ENCODE measurements at regions of chr15 and their contacts with region 1.

Region 1: GRCh38 chr15:74906446-74907162 is at the start of gene FAM219B:
- DNase-seq: peak; percentile 68 to 83 (median 71)
- H3K4me3 ChIP-seq: peak within 1 kb of the TSS; percentile 93
- H3K4me3 Mint-ChIP-seq: peak within 1 kb of the TSS; percentile 92 to 99 (median 99)
- H3K27ac ChIP-seq: peak within 1 kb of the TSS; percentile 80
- H3K27ac Mint-ChIP-seq: peak within 1 kb of the TSS; percentile 94 to 99 (median 98)
- H3K4me1 ChIP-seq: peaks cover 32% of the 10 kb centered on the region
- H3K4me1 Mint-ChIP-seq: peaks cover 38 to 42% (median 41%) of the 10 kb centered on the region in 3 donors
- H3K27me3 ChIP-seq: no peaks in the 10 kb centered on the region
- H3K27me3 Mint-ChIP-seq: no peaks in the 10 kb centered on the region
- total RNA-seq, gene FAM219B: 45.0 to 47.7 TPM

Region 2: DNA sequence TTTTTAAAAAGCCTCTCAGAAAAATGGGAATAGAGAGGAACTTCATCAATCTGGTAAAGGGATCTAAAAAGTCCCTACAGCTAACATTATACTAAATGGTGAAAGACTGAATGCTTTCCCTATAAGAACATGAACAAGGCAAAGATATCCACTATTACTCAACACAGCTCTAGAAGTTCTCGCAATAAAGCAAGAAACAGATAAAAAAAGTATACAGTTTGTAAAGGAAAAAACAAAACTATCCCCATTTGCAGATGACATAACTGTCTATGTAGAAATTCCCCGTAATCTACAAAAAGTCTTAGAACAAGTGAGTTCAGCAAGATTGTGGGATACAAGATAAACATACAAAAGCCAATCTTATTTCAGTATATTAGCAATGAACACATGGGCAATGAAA is 226.1 kb before region 1 on chr15:
- CTCF ChIA-PET with region 1: no interaction called
- POLR2A ChIA-PET with region 1: no interaction called
- DNase-seq: no peak
- H3K4me3 ChIP-seq: no peak overlapping the region
- H3K4me3 Mint-ChIP-seq: no peak overlapping the region
- H3K27ac ChIP-seq: no peak overlapping the region
- H3K27ac Mint-ChIP-seq: no peak overlapping the region
- H3K4me1 ChIP-seq: no peaks in the 10 kb centered on the region
- H3K4me1 Mint-ChIP-seq: peaks cover 30 to 45% (median 37%) of the 10 kb centered on the region in 3 donors
- H3K27me3 ChIP-seq: no peaks in the 10 kb centered on the region
- H3K27me3 Mint-ChIP-seq: no peaks in the 10 kb centered on the region

Region 3: DNA sequence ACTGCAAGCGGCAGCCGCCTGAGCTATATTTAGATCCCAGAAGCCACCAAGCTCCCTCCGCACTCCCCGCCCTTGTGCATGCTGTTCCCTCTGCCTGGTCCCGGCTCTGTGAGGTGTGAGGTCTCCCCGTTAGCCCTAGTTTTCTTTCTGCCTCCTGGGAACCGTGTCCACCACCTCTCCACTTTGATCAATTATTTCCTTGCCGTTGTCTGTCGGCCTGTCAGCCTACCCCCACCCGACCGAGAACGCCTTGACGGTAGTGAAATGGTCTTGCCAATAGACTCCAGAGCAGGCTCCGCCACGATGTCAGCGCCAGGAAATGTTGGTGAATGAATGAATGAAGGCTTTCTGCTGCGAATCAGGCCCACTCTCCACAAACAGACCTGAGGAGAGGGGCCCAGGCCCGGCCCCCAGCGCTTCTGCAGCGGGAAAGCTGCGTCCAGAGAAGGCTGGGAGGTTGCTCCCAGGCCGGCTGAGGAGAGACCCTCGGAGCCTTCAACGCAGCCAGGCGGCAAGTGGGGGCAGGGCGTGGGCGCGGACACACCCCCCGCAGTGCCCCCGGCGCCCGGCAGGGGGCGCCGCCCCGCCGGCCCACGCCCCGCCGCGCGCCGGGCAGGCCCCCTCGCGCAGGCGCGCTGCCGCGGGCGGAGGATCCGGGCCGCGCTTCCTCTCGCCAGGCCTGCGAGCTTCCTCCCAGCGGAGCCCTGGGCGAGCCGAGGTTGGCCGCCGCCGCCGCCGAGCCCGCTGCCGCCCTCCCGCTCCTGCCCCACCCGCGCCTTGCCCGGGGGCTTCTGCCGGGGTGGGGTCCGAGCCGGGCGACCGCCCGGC is 125.0 kb before region 1 on chr15 and contains the start of gene CSK:
- CTCF ChIA-PET with region 1: interaction called, 15 read pairs
- POLR2A ChIA-PET with region 1: interaction called, 3 read pairs
- DNase-seq: peak; percentile 76 to 87 (median 83)
- H3K4me3 ChIP-seq: peak within 1 kb of the TSS; percentile 99
- H3K4me3 Mint-ChIP-seq: peak within 1 kb of the TSS; percentile 85 to 98 (median 95)
- H3K27ac ChIP-seq: peak within 1 kb of the TSS; percentile 74
- H3K27ac Mint-ChIP-seq: peak within 1 kb of the TSS; percentile 93 to 100 (median 98)
- H3K4me1 ChIP-seq: peaks cover 66% of the 10 kb centered on the region
- H3K4me1 Mint-ChIP-seq: peaks cover 71 to 81% (median 76%) of the 10 kb centered on the region in 3 donors
- H3K27me3 ChIP-seq: no peaks in the 10 kb centered on the region
- H3K27me3 Mint-ChIP-seq: peaks cover 0 to 5% of the 10 kb centered on the region in 2 donors
- total RNA-seq, gene CSK: 288 to 294 TPM

Region 4: DNA sequence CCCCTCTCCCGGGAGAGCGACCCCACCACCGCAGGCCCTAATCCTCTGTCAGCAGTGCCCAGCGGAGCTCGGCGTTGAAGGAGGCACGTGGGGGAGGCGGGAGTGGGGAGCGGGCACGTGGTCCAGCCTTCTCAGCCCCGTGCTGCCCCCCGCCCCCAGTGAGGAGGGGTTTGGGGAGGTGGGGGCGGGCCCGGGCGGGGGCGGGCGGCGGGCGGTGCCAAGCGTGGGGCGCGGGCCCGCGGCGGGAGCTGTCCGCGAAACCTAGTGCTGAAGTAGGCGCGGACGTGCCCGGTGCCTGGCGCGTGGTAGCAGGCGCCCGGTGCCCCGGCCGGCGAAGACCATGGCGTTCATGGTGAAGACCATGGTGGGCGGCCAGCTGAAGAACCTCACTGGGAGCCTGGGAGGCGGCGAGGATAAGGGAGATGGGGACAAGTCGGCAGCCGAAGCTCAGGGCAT is 80.2 kb before region 1 on chr15 and contains the start of gene CPLX3:
- CTCF ChIA-PET with region 1: interaction called, 12 read pairs
- POLR2A ChIA-PET with region 1: no interaction called
- DNase-seq: peak; percentile 28 to 62 (median 44)
- H3K4me3 ChIP-seq: no peak within 1 kb of the TSS
- H3K4me3 Mint-ChIP-seq: no peak within 1 kb of the TSS
- H3K27ac ChIP-seq: no peak within 1 kb of the TSS
- H3K27ac Mint-ChIP-seq: no peak within 1 kb of the TSS
- H3K4me1 ChIP-seq: no peaks in the 10 kb centered on the region
- H3K4me1 Mint-ChIP-seq: peaks cover 0 to 7% (median 1%) of the 10 kb centered on the region in 3 donors
- H3K27me3 ChIP-seq: peaks cover 15% of the 10 kb centered on the region
- H3K27me3 Mint-ChIP-seq: peaks cover 18 to 33% of the 10 kb centered on the region in 2 donors
- total RNA-seq, gene CPLX3: not detected

Region 5: DNA sequence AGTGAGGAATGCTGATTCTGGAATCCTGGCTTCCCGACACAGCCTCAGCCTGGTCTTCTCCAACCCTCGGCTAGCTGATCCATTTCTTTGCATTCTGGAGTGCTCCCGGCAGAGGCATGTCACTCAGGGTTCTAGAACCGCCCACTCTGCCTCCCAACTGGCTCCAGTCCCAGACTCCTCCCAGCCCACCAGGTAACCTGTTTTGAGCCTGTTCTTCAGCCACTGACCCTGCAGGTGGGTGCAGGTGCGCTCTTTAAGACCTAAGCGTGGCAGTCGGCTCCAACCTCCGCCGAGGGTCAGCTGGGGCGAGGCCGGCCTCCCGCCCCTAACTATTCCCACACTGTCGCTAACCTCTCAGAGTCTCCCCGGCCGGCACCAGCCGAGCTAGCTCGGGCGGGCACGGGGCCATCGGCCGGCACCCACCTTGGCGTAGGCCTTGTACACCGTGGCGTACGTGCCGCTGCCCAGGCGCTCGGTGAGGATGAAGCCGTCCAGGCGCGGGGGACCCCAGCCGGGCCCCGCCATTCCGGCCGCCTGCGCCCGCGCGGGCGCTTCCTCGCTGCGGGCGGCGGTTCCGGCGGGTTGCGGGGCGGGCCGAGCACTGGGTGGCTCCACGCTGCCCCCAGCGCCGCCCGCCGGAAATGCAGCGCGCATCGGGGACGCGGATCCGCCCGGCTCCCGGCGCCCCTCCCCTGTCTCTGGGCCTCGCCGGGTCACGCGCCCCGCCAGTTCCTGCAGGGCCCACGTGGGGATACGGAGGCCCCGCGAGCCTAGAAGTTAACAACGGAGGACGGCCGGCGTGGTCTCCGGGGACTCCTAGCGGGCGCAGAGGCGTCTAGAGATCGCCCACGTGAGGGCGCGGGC is 63.8 kb before region 1 on chr15 and contains the start of gene ULK3:
- CTCF ChIA-PET with region 1: interaction called, 44 read pairs
- POLR2A ChIA-PET with region 1: interaction called, 6 read pairs
- DNase-seq: peak; percentile 91 to 93 (median 91)
- H3K4me3 ChIP-seq: peak within 1 kb of the TSS; percentile 88
- H3K4me3 Mint-ChIP-seq: peak within 1 kb of the TSS; percentile 83 to 96 (median 88)
- H3K27ac ChIP-seq: peak within 1 kb of the TSS; percentile 72
- H3K27ac Mint-ChIP-seq: peak within 1 kb of the TSS; percentile 87 to 98 (median 93)
- H3K4me1 ChIP-seq: peaks cover 48% of the 10 kb centered on the region
- H3K4me1 Mint-ChIP-seq: peaks cover 47 to 59% (median 50%) of the 10 kb centered on the region in 3 donors
- H3K27me3 ChIP-seq: no peaks in the 10 kb centered on the region
- H3K27me3 Mint-ChIP-seq: no peaks in the 10 kb centered on the region
- total RNA-seq, gene ULK3: 53.9 to 60.1 TPM

Region 6: GRCh38 chr15:74857712-74858368 is 48.8 kb before region 1 on chr15:
- CTCF ChIA-PET with region 1: interaction called, 13 read pairs
- POLR2A ChIA-PET with region 1: interaction called, 7 read pairs
- DNase-seq: no peak
- H3K4me3 ChIP-seq: no peak overlapping the region
- H3K4me3 Mint-ChIP-seq: peak overlapping the region in 5 of 7 donors; percentile 0 to 68 (median 45)
- H3K27ac ChIP-seq: no peak overlapping the region
- H3K27ac Mint-ChIP-seq: peak overlapping the region; percentile 70 to 96 (median 87)
- H3K4me1 ChIP-seq: peaks cover 35% of the 10 kb centered on the region
- H3K4me1 Mint-ChIP-seq: peaks cover 32 to 44% (median 37%) of the 10 kb centered on the region in 3 donors
- H3K27me3 ChIP-seq: no peaks in the 10 kb centered on the region
- H3K27me3 Mint-ChIP-seq: no peaks in the 10 kb centered on the region

Region 7: GRCh38 chr15:74884428-74885223 is 22.0 kb before region 1 on chr15:
- CTCF ChIA-PET with region 1: interaction called, 12 read pairs
- POLR2A ChIA-PET with region 1: interaction called, 11 read pairs
- DNase-seq: no peak
- H3K4me3 ChIP-seq: no peak overlapping the region
- H3K4me3 Mint-ChIP-seq: no peak overlapping the region
- H3K27ac ChIP-seq: no peak overlapping the region
- H3K27ac Mint-ChIP-seq: no peak overlapping the region
- H3K4me1 ChIP-seq: peaks cover 6% of the 10 kb centered on the region
- H3K4me1 Mint-ChIP-seq: peaks cover 14 to 21% (median 17%) of the 10 kb centered on the region in 3 donors
- H3K27me3 ChIP-seq: no peaks in the 10 kb centered on the region
- H3K27me3 Mint-ChIP-seq: no peaks in the 10 kb centered on the region

Region 8: GRCh38 chr15:74950078-74951000 is 43.7 kb after region 1 on chr15:
- CTCF ChIA-PET with region 1: interaction called, 11 read pairs
- POLR2A ChIA-PET with region 1: no interaction called
- DNase-seq: peak; percentile 64 to 82 (median 69)
- H3K4me3 ChIP-seq: no peak overlapping the region
- H3K4me3 Mint-ChIP-seq: peak overlapping the region in 1 of 7 donors; percentile 1
- H3K27ac ChIP-seq: no peak overlapping the region
- H3K27ac Mint-ChIP-seq: no peak overlapping the region
- H3K4me1 ChIP-seq: peaks cover 3% of the 10 kb centered on the region
- H3K4me1 Mint-ChIP-seq: peaks cover 0 to under 1% (median 0%) of the 10 kb centered on the region in 3 donors
- H3K27me3 ChIP-seq: no peaks in the 10 kb centered on the region
- H3K27me3 Mint-ChIP-seq: peaks cover 0 to 3% of the 10 kb centered on the region in 2 donors

Region 9: DNA sequence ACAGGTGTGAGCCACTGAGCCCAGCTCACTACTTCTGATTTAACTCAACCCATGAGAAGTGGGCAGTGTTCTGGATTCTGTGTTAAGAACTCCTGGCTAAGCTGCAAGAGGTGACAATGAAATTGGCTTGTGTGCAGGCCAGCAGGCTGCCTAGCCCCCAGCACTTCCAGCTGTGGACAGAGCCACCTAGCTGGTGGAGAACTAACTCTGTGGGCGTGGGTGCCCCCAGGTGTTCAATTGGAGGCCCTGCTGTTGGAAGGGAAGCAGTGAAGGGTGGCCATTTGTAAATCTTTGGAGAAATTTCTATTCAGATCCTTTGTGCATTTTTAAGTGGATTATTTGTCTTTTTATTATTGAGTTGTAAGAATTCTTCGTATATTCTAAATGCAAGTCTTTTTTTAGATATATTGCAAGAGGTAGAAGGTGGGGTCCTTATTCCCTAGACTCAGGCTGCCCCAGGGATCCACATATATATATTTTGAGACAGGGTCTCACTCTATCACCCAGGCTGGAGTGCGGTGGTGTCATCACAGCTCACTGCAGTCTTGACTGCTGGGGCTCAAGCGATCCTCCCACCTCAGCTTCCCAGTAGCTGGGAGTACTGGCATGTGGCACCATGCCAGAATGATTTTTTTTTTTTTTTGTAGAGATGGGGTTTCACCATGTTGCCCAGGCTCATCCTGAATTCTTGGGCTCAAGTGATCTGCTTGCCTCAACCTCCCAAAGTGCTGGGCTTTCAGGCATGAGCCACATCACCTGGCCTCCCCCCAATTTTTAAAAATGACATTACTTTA is 81.6 kb after region 1 on chr15:
- CTCF ChIA-PET with region 1: no interaction called
- POLR2A ChIA-PET with region 1: no interaction called
- DNase-seq: peak in 3 of 5 donors; percentile 7 to 52 (median 10)
- H3K4me3 ChIP-seq: no peak overlapping the region
- H3K4me3 Mint-ChIP-seq: no peak overlapping the region
- H3K27ac ChIP-seq: no peak overlapping the region
- H3K27ac Mint-ChIP-seq: no peak overlapping the region
- H3K4me1 ChIP-seq: no peaks in the 10 kb centered on the region
- H3K4me1 Mint-ChIP-seq: no peaks in the 10 kb centered on the region
- H3K27me3 ChIP-seq: no peaks in the 10 kb centered on the region
- H3K27me3 Mint-ChIP-seq: peaks cover 8 to 22% of the 10 kb centered on the region in 2 donors

Region 10: GRCh38 chr15:75058127-75058905 is 151.7 kb after region 1 on chr15:
- CTCF ChIA-PET with region 1: no interaction called
- POLR2A ChIA-PET with region 1: no interaction called
- DNase-seq: no peak
- H3K4me3 ChIP-seq: no peak overlapping the region
- H3K4me3 Mint-ChIP-seq: peak overlapping the region in 1 of 7 donors; percentile 19
- H3K27ac ChIP-seq: no peak overlapping the region
- H3K27ac Mint-ChIP-seq: no peak overlapping the region
- H3K4me1 ChIP-seq: no peaks in the 10 kb centered on the region
- H3K4me1 Mint-ChIP-seq: peaks cover 3 to 5% (median 5%) of the 10 kb centered on the region in 3 donors
- H3K27me3 ChIP-seq: no peaks in the 10 kb centered on the region
- H3K27me3 Mint-ChIP-seq: no peaks in the 10 kb centered on the region